ENCODE measurements at regions of chr6 and their contacts with region 1.

Region 1: GRCh38 chr6:100335991-100336390 is 128.7 kb downstream of the SIM1 start:
- DNase-seq: no peak
- H3K4me3 ChIP-seq: no peak overlapping the region
- H3K27ac ChIP-seq: no peak overlapping the region
- H3K4me1 ChIP-seq: no peaks in the 10 kb centered on the region
- H3K27me3 ChIP-seq: no peaks in the 10 kb centered on the region
- CTCF ChIP-seq: no peak
- EP300 ChIP-seq: no peak
- POLR2A ChIP-seq: no peak

Region 2: DNA sequence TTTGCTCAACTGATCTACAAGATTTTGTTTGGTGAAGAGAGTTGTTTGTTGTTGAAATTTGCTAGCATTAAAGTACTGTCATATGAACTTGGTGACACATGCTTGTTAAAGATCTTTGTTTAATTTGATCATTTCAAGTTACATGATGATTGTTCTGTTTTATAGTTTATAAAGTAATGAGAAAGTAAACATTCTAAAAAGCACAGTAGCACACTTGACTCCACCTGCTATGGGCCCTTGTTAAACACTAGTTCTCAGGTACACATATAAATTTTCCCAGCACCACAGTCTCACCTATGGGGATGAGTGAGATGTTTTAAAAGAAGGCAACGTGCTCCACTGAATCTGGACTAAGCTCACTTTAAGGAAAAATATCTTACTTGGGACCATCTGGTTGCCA is 356.0 kb before region 1 on chr6:
- intact Hi-C with region 1: no loop called
- DNase-seq: no peak
- H3K4me3 ChIP-seq: no peak overlapping the region
- H3K27ac ChIP-seq: no peak overlapping the region
- H3K4me1 ChIP-seq: no peaks in the 10 kb centered on the region
- H3K27me3 ChIP-seq: no peaks in the 10 kb centered on the region
- CTCF ChIP-seq: no peak
- EP300 ChIP-seq: no peak
- POLR2A ChIP-seq: no peak

Region 3: DNA sequence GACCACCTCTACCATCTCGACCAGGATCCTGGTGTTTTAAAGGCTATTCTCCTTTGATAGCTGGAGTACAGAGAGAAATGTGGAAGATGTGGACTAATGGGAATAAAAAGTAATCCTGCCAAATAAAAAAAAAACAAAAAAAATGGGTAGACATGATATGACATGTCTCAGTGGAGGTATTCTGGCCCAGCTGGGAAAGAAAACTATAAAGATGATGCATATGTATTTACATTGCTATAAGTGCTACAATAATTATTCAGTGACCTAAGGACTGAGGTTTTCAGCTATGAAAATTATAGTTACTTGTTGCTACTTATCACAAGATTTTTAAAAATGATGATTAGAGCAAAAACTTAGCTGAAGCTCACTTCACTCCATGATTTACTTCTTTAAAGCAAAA is 27.7 kb after region 1 on chr6:
- intact Hi-C with region 1: no loop called
- DNase-seq: no peak
- H3K4me3 ChIP-seq: no peak overlapping the region
- H3K27ac ChIP-seq: no peak overlapping the region
- H3K4me1 ChIP-seq: no peaks in the 10 kb centered on the region
- H3K27me3 ChIP-seq: no peaks in the 10 kb centered on the region
- CTCF ChIP-seq: no peak
- EP300 ChIP-seq: no peak
- POLR2A ChIP-seq: no peak

Region 4: GRCh38 chr6:100568255-100568654 is 232.3 kb after region 1 on chr6:
- intact Hi-C with region 1: loop called in 1 of 4 experiments (anchors 5 kb)
- DNase-seq: no peak
- H3K4me3 ChIP-seq: no peak overlapping the region
- H3K27ac ChIP-seq: no peak overlapping the region
- H3K4me1 ChIP-seq: no peaks in the 10 kb centered on the region
- H3K27me3 ChIP-seq: no peaks in the 10 kb centered on the region
- CTCF ChIP-seq: no peak
- EP300 ChIP-seq: no peak
- POLR2A ChIP-seq: no peak